Ascending aorta (tissue), 2 donors: ENCODE measurements at regions of chr1 and their contacts with region 1.

Region 1: DNA sequence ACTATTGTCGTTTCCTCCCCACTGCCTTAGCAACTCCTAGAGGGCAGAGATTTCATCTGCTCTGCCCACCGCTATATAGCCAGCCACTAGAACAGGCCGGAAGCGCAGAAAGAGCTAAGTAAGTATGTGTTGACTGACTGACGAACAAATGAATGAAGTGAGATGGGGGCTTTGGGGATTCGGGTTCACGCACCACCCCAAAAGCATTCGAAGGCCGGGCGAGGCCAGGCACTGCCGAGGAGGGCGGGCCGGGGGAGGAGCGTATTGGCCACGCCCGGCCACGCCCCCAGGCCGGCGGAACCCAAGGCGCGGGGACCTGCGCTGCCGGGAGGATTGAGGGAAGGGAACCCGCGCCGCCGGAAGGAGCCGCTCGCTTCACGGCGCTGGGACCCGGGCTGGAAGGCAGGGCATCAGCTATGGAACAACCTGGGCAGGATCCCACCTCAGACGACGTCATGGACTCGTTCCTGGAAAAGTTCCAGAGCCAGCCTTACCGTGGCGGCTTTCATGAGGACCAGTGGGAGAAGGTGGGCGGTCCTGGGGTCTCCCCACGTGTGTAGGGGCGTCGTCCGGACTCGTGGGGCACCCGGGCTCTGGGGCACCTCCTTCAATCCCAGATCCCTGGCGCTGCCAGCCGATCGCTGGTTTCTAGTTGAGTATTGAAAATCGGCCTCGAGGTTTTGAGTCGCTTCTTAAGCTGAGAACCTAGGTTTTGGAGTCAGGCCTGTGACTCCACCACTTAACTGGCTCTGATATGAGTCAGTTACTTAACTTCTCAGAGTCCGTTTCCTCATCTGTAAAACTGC is at the start of gene TTC4:
- DNase-seq: peak; percentile 25 to 88
- H3K4me3 ChIP-seq: peak within 1 kb of the TSS; percentile 69 to 92
- H3K27ac ChIP-seq: peak within 1 kb of the TSS; percentile 73 to 82
- H3K4me1 ChIP-seq: peaks cover 0 to 8% of the 10 kb centered on the region in 2 donors
- H3K27me3 ChIP-seq: no peaks in the 10 kb centered on the region
- CTCF ChIP-seq: no peak
- total RNA-seq, gene TTC4: 20.6 TPM

Region 2: DNA sequence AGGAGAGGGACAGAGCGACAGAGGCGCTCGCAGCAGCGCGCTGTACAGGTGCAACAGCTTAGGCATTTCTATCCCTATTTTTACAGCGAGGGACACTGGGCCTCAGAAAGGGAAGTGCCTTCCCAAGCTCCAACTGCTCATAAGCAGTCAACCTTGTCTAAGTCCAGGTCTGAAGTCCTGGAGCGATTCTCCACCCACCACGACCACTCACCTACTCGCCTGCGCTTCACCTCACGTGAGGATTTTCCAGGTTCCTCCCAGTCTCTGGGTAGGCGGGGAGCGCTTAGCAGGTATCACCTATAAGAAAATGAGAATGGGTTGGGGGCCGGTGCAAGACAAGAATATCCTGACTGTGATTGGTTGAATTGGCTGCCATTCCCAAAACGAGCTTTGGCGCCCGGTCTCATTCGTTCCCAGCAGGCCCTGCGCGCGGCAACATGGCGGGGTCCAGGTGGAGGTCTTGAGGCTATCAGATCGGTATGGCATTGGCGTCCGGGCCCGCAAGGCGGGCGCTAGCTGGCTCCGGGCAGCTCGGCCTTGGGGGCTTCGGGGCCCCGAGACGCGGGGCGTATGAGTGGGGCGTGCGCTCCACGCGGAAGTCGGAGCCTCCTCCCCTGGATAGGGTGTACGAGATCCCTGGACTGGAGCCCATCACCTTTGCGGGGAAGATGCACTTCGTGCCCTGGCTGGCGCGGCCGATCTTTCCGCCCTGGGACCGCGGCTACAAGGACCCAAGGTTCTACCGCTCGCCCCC is 515.8 kb before region 1 on chr1 and contains the starts of genes CYB5RL and MRPL37:
- intact Hi-C with region 1: loop called (anchors 10 kb)
- DNase-seq: peak; percentile 74 to 96
- H3K4me3 ChIP-seq: peak within 1 kb of the TSS; percentile 73 to 75
- H3K27ac ChIP-seq: peak within 1 kb of the TSS; percentile 44 to 68
- H3K4me1 ChIP-seq: peaks cover 0 to 16% of the 10 kb centered on the region in 2 donors
- H3K27me3 ChIP-seq: no peaks in the 10 kb centered on the region
- CTCF ChIP-seq: no peak
- total RNA-seq, gene CYB5RL: 5.1 TPM
- total RNA-seq, gene MRPL37: 51.2 TPM

Region 3: GRCh38 chr1:54499360-54500106 is 216.2 kb before region 1 on chr1:
- intact Hi-C with region 1: loop called (anchors 10 kb)
- DNase-seq: no peak
- H3K4me3 ChIP-seq: peak overlapping the region; percentile 58 to 70
- H3K27ac ChIP-seq: no peak overlapping the region
- H3K4me1 ChIP-seq: peaks cover 0 to 10% of the 10 kb centered on the region in 2 donors
- H3K27me3 ChIP-seq: no peaks in the 10 kb centered on the region
- CTCF ChIP-seq: peak; percentile 25 to 53 (median 38)

Region 4: DNA sequence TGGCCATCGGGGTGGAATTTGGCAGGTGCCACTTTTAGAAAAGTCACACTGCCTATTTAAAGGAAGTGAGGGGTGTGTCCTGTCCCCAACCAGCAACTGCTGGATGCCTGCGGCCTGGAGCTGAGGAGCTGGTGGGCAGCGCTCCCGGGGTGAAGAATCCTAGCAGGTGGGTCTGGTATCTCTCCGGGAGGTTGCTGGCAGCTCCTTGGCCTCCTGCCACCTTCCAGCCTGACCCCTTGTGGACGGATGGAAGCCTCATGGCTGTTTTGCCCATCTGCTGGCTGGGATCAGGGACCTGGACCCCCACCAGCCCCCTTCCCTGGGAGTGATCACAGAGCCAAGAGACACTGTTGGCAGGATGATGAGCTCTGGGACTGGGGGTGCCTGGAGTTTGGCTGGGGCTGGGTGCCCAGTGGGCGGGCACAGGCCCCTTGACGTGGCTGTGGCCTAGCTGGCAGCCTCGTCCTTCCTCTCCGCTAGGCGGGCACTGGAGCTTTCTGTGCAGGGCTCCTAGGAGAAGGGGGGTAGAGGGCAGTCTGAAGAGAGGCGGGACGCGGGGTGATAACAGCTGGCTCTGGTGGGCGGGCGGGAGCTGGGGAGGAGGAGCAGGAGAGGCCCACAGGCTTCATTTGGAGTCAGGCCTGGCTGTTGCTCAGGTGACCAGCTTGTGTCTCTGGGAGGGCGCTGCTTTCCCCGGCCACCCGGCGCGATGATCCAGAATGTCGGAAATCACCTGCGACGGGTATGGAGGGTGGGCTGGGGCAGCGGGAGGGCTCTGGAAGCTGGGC is 167.9 kb before region 1 on chr1 and contains the start of gene ACOT11:
- intact Hi-C with region 1: loop called (anchors 2 kb)
- DNase-seq: peak; percentile 69 to 94
- H3K4me3 ChIP-seq: peak within 1 kb of the TSS; percentile 44 to 59
- H3K27ac ChIP-seq: peak within 1 kb of the TSS; percentile 83 to 92
- H3K4me1 ChIP-seq: peaks cover 18 to 20% of the 10 kb centered on the region in 2 donors
- H3K27me3 ChIP-seq: no peaks in the 10 kb centered on the region
- CTCF ChIP-seq: peak; percentile 58 to 73 (median 70)
- total RNA-seq, gene ACOT11: 30.4 TPM